K562 (cell line): ENCODE measurements at regions of chr15 and their contacts with region 1.

Region 1: DNA sequence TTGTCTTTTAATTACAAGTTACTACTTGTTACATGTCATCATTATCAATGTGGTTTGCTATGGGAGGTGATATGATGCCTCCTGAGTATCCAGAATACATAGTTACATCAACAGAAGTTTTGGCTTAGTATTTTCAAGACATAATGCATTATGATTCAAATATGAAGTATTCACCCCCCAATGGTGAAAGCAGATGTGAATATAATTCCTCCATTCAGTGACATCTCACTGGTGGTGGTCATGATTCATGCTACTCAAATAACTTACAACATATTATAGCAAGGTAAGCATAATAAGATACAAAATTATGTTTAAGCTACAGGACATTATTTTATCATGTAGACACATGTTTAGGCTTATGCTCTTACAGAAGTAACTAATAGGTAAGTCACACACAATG is 34.9 kb upstream of the TTBK2 start:
- DNase-seq: no peak
- ATAC-seq: no peak
- H3K4me3 ChIP-seq: no peak overlapping the region
- H3K27ac ChIP-seq: no peak overlapping the region
- H3K4me1 ChIP-seq: peaks cover 0 to 10% of the 10 kb centered on the region in 2 experiments; a peak in 3 of 5 replicates
- H3K27me3 ChIP-seq: no peaks in the 10 kb centered on the region
- CTCF ChIP-seq: no peak
- EP300 ChIP-seq: no peak
- POLR2A ChIP-seq: no peak
- RAD21 ChIP-seq: no peak

Region 2: DNA sequence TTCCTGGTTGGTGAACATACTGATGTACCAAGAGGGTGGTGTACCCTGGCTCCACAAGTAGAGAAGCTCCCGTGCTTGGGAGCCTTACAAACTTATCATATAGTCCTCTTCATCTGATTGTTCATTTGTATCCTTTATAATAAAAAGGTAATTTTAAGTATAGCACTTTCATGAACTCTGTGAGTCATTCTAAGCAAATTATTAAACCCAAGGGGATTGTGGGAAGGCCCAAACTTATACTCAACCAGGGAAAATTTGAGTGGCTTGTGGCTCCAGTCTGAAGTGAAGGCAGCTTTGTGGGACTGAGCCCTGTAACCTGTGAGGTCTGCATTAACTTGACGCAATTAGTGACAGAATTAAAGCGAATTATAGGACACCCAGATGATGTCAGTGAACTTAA is 63.9 kb before region 1 on chr15:
- CTCF ChIA-PET with region 1: no interaction called
- POLR2A ChIA-PET with region 1: no interaction called
- in situ Hi-C with region 1: no loop called
- intact Hi-C with region 1: no loop called
- DNase-seq: no peak
- ATAC-seq: no peak
- H3K4me3 ChIP-seq: no peak overlapping the region
- H3K27ac ChIP-seq: no peak overlapping the region
- H3K4me1 ChIP-seq: no peaks in the 10 kb centered on the region
- H3K27me3 ChIP-seq: no peaks in the 10 kb centered on the region
- CTCF ChIP-seq: no peak
- EP300 ChIP-seq: no peak
- POLR2A ChIP-seq: no peak
- RAD21 ChIP-seq: no peak

Region 3: GRCh38 chr15:42939841-42940240 is 15.7 kb before region 1 on chr15:
- CTCF ChIA-PET with region 1: no interaction called
- POLR2A ChIA-PET with region 1: interaction called, 10 read pairs
- in situ Hi-C with region 1: no loop called
- intact Hi-C with region 1: no loop called
- DNase-seq: no peak
- ATAC-seq: no peak
- H3K4me3 ChIP-seq: no peak overlapping the region
- H3K27ac ChIP-seq: no peak overlapping the region
- H3K4me1 ChIP-seq: no peaks in the 10 kb centered on the region
- H3K27me3 ChIP-seq: no peaks in the 10 kb centered on the region
- CTCF ChIP-seq: no peak
- EP300 ChIP-seq: no peak
- POLR2A ChIP-seq: no peak
- RAD21 ChIP-seq: no peak

Region 4: GRCh38 chr15:43029476-43029875 is 74.0 kb after region 1 on chr15:
- CTCF ChIA-PET with region 1: no interaction called
- POLR2A ChIA-PET with region 1: no interaction called
- in situ Hi-C with region 1: no loop called
- intact Hi-C with region 1: no loop called
- DNase-seq: no peak
- ATAC-seq: no peak
- H3K4me3 ChIP-seq: no peak overlapping the region
- H3K27ac ChIP-seq: no peak overlapping the region
- H3K4me1 ChIP-seq: no peaks in the 10 kb centered on the region
- H3K27me3 ChIP-seq: no peaks in the 10 kb centered on the region
- CTCF ChIP-seq: no peak
- EP300 ChIP-seq: no peak
- POLR2A ChIP-seq: no peak
- RAD21 ChIP-seq: no peak

Region 5: GRCh38 chr15:43118829-43119228 is 163.3 kb after region 1 on chr15:
- CTCF ChIA-PET with region 1: no interaction called
- POLR2A ChIA-PET with region 1: no interaction called
- in situ Hi-C with region 1: no loop called
- intact Hi-C with region 1: no loop called
- DNase-seq: no peak
- ATAC-seq: no peak
- H3K4me3 ChIP-seq: no peak overlapping the region
- H3K27ac ChIP-seq: no peak overlapping the region
- H3K4me1 ChIP-seq: peaks cover 10% of the 10 kb centered on the region in 2 experiments; a peak in 4 of 5 replicates
- H3K27me3 ChIP-seq: no peaks in the 10 kb centered on the region
- CTCF ChIP-seq: no peak
- EP300 ChIP-seq: no peak
- POLR2A ChIP-seq: no peak
- RAD21 ChIP-seq: no peak